ENCODE measurements at regions of chr1 and their contacts with region 1.

Region 1: DNA sequence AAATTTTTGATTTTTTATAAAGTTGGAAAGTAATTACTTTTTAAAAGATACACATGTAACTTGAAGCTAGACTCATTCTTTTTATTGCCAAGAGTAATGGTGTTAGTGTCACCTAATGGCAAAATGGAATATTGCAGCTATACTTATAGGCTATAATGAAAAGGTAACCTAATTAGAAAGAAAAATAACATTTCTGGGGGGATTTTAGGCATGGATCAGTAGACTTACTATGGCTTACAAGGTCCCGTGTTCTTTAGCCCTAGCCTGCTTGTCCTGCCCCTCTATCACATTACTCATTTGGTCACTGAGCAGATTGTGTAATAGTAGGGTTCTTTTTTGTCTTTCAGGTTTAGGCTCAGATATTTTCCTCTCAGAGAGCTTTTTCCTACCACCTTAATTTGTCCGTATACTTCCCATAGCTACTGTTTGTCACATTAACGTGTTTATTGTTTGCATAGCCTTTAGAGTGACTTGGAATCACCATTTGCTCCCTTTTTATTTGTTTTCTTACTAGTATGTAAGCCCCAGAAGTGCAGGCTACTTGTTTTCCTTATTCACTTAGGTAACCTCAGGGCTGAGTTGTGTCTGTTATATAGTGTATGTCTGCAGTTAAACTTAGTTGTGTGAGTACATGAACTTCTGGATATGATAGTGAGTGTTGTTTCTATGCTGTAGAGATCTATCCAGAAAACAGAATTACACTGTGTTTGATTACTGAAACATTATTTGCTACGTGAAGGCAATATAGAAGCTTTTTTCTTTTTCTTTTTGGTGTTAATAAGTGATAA is 58.7 kb downstream of the RABGAP1L start:
- DNase-seq: no peak
- ATAC-seq: peak; percentile 56 to 57
- H3K4me3 ChIP-seq: no peak overlapping the region
- H3K27ac ChIP-seq: no peak overlapping the region
- H3K4me1 ChIP-seq: no peaks in the 10 kb centered on the region
- H3K27me3 ChIP-seq: no peaks in the 10 kb centered on the region

Region 2: GRCh38 chr1:173648880-173649605 is 568.9 kb before region 1 on chr1:
- intact Hi-C with region 1: no loop called
- DNase-seq: no peak
- ATAC-seq: no peak
- H3K4me3 ChIP-seq: no peak overlapping the region
- H3K27ac ChIP-seq: no peak overlapping the region
- H3K4me1 ChIP-seq: no peaks in the 10 kb centered on the region
- H3K27me3 ChIP-seq: no peaks in the 10 kb centered on the region

Region 3: DNA sequence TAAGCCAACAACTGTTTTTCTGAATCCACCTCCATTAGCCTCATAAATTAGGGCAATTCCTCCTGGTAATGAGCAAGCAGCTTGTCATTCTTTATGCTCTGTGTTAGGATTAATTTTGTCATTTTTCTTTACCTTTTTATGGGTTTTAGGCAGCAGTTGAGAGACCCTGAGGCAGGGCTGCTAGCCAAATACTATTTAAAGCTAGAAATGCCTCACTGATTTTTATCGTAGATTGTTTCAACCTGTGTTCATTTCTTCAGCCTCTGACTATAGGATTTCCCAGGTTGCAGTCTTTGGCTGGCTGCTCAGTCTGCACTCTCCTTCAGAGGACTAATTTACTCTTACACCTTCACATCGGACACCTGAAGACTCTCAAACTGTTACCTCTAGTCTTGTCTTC is 120.6 kb before region 1 on chr1:
- intact Hi-C with region 1: loop called in 3 of 4 experiments (anchors 10 kb)
- DNase-seq: no peak
- ATAC-seq: no peak
- H3K4me3 ChIP-seq: no peak overlapping the region
- H3K27ac ChIP-seq: no peak overlapping the region
- H3K4me1 ChIP-seq: no peaks in the 10 kb centered on the region
- H3K27me3 ChIP-seq: no peaks in the 10 kb centered on the region

Region 4: DNA sequence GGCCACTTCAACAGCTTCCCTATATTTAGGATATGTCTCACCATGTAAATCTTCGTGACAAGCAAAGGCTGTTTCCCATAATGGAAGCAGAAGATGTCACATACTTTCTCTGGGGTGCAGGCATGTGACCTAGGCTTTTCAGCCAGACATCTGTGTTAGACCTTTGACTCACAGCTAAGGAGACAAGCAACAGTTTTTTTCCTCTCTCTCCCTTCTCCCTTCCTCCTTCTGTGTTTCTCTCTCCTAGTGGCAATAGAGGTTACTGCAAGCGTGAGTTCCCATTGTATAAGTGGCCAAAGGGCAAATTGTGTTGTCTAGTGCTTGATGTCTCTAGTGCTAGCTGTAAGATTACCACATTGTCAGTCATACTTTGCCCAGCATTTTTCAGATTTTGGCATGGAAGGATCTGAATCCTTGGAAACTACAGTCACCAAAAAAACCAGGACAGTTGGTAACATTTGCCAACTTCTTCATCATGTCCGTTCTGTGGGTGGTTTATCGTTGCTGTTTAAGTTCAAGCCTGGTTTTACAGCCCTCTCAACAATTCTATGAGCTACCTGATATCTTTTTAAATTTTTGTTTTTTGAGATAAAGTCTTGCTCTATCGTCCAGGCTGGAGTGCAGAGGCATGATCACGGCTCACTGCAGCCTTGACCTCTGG is 103.1 kb before region 1 on chr1:
- intact Hi-C with region 1: loop called in 1 of 4 experiments (anchors 10 kb)
- DNase-seq: no peak
- ATAC-seq: peak; percentile 53 to 66
- H3K4me3 ChIP-seq: no peak overlapping the region
- H3K27ac ChIP-seq: no peak overlapping the region
- H3K4me1 ChIP-seq: no peaks in the 10 kb centered on the region
- H3K27me3 ChIP-seq: no peaks in the 10 kb centered on the region

Region 5: DNA sequence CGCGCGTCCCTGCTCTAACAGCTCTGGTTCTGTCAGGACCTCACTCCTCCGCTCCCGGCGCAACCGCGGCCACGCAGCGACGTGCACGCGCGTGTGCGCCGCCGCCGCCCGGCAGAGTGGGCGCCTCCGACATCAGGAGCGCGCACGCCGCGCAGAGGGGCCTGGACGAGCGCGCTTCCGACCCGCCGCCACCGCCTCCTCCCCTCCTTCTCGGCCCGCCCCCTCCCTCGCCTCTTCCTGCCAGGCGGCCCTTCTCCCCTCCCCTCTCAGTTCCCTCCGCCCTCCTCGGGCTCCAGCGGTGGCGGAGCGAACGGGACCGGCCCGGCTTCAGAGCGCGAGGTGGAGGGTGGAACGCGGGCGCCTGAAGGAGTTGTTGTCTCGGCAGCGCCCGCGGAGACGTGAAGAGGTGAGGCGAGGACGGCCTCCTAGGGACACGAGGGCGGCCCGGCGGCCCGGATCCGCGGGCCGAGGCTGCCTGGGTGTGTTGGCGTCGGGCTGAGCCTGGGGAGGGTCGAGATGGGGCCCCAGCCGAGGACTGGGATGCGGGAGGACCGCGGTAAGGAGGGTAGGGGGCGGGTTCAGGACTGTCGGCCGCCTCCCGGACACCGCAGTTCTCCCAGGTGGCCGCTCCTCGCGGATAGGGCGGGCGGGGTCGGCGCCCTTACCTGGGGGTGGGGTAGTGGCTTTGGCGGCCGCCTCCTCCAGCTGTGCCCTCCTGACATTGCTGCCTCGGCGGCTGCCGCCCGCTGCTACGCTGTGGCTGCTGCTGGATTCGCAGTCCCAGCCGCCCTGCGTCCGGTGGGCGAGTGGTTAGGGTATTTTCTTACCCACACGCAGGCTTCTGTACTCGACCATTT is 58.5 kb before region 1 on chr1 and contains the start of gene RABGAP1L:
- intact Hi-C with region 1: loop called in 2 of 4 experiments (anchors 10 kb)
- DNase-seq: peak; percentile 96 to 98 (median 98)
- ATAC-seq: peak; percentile 99
- H3K4me3 ChIP-seq: peak within 1 kb of the TSS; percentile 81
- H3K27ac ChIP-seq: peak within 1 kb of the TSS; percentile 80
- H3K4me1 ChIP-seq: no peaks in the 10 kb centered on the region
- H3K27me3 ChIP-seq: no peaks in the 10 kb centered on the region
- total RNA-seq, gene RABGAP1L: 174 to 367 (median 215) TPM

Region 6: GRCh38 chr1:174491606-174492005 is 273.6 kb after region 1 on chr1:
- intact Hi-C with region 1: no loop called
- DNase-seq: no peak
- ATAC-seq: no peak
- H3K4me3 ChIP-seq: no peak overlapping the region
- H3K27ac ChIP-seq: no peak overlapping the region
- H3K4me1 ChIP-seq: no peaks in the 10 kb centered on the region
- H3K27me3 ChIP-seq: no peaks in the 10 kb centered on the region

Region 7: GRCh38 chr1:175481126-175482066 is 1263.4 kb after region 1 on chr1:
- intact Hi-C with region 1: no loop called
- DNase-seq: no peak
- ATAC-seq: peak; percentile 22 to 56
- H3K4me3 ChIP-seq: no peak overlapping the region
- H3K27ac ChIP-seq: no peak overlapping the region
- H3K4me1 ChIP-seq: no peaks in the 10 kb centered on the region
- H3K27me3 ChIP-seq: no peaks in the 10 kb centered on the region